HEK293 (cell line): ENCODE measurements at regions of chr6 and their contacts with region 1.

Region 1: DNA sequence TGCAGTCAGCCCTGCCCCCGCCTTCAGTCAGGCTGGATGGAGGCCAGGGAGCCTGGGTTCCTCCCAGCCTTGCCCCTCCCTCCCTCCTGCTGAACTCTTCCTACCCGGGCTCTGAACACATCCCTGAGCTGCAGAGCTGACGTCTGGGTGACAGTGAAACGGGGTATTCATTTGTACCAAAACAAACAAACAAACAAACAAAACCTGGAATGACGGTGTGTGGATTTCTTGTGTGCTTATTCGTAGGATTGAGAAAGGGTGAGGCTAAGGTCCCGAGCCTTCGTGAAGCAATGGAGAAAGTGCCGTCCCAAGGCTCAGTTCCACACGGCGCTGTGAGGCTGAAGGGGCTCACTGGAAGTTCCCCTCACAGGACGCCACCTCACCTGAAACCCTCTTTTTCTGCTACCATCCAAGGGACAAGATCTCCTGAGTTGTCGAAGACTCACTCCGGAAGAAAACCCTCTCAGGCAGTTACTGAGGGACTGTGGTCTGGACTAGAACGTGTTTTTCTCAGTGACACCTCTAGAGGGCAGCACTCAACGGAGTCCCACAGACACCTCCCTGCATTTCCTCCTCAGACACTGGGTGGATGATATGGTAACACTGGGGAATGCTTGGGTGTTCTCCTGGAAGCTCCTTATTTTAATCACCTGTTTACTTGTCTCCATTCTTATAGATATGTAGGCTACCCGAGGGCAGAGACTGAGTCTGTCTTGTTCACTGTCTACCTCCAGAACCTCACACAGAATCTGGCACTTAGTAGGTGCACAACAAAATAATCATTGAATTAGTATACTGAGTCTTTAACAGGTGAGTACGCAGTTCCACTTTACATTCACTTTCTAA is 27.3 kb downstream of the GSTA3 start:
- H3K4me3 ChIP-seq: peak overlapping the region; percentile 45
- H3K27ac ChIP-seq: no peak overlapping the region; the same call in 1 of the 2 replicates
- H3K4me1 ChIP-seq: no peaks in the 10 kb centered on the region
- CTCF ChIP-seq: peak; percentile 72

Region 2: GRCh38 chr6:52779237-52779636 is 103.0 kb before region 1 on chr6:
- CTCF ChIA-PET with region 1: no interaction called
- POLR2A ChIA-PET with region 1: no interaction called
- H3K4me3 ChIP-seq: no peak overlapping the region
- H3K27ac ChIP-seq: no peak overlapping the region
- H3K4me1 ChIP-seq: no peaks in the 10 kb centered on the region
- CTCF ChIP-seq: no peak

Region 3: DNA sequence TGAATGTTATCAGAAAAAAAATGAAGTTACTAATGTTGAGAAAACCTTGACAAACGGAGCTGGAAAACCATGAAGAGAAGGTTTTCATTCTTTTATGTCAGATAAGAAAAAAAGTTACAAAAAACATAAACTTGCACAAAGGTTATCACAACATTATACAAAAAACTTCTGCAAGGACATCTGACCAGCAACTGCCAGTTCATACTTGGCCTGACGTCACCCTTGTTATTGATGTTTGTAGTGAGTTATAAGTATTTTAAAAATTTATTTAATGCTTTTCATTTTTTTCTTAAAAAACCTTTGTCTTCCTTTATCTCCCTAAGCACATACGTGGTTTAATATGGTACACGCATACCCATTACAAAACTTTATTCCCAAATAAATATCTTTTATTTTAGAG is 11.0 kb after region 1 on chr6:
- CTCF ChIA-PET with region 1: interaction called, 15 read pairs
- POLR2A ChIA-PET with region 1: interaction called, 3 read pairs
- H3K4me3 ChIP-seq: no peak overlapping the region
- H3K27ac ChIP-seq: no peak overlapping the region
- H3K4me1 ChIP-seq: no peaks in the 10 kb centered on the region
- CTCF ChIP-seq: no peak

Region 4: DNA sequence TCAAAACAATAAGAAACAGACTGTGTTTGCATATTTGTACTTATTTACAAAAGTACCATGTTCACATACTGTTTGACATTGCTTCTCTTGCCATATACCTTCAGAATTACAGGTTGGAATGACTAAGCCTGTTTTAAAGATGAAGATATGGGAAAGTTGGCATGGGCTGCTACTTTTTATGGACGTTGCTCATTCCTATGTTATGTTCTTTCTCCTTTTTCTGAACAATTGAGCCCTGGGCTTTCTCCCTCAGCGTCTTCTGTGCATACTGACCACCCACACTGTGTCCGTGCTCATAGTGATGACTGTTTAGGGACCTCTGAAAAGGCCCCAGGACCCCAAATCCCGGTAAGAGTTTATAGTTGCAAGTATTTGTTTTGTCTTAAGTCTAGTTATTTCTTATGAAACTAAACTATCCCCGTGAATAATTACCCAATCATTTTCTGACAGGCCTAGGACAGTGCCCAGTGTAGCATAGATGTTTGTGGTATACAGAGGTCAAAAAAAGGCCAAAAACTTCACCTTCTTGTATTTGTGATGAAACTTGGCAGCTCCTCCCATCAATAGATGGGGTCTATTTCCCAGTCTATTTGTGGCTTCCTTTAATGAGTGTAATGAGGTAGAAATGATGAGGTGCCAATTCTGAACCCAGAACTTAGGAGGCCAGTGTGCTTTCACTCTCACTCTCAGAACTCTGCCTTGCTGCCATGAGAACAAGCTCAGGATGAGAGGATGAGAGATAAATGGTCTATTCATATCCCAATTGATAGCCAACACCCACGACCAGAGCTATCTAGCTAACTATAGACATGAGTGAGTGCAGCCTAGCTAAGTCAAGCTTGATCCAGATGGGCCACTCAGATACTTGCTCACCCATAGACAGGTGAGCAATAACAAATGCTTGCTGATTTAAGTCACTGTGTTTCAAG is 72.0 kb after region 1 on chr6:
- CTCF ChIA-PET with region 1: no interaction called
- POLR2A ChIA-PET with region 1: no interaction called
- H3K4me3 ChIP-seq: no peak overlapping the region
- H3K27ac ChIP-seq: no peak overlapping the region
- H3K4me1 ChIP-seq: no peaks in the 10 kb centered on the region
- CTCF ChIP-seq: no peak